Transverse colon (tissue), 4 donors: ENCODE measurements at regions of chr18 and their contacts with region 1.

Region 1: DNA sequence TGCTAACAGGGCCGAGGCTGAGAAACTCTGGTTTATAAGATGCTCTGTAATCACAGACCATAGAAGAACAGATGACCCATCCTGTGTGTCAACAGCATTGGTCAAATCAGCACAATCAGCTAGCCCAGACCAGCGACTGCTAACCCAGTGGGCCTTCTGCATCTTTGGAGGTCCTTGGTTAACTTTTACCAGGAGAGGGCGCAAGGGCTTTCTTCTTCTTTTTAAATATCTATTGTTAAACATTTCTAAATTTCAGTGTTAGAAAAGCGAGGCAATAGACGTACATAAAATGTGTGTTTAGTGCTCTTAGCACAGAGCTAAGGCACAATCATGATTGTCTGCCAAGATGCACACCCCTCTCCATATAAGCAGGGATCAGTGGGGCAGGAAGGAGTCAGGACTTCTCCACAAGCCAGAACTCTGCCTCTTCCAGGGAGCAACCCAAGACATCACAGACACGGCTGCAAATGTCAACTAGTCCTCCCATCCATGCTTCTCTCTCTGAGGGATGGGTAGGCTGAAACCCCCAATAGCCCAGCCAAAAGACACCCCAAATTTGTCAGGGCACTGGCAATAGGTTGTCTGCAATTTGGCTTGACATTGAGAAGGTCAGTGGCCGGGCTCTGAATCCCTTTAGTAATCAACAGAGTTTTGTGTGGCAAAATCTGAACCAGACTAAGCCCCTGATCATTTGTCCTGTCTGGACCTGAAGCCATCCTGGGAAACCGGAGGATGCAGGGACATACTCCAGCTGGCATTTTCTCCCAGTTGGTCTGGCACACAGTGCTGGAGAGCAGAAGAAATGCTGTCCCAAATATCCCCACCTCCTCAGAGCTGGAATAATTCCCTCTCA is 188.2 kb downstream of the BCL2 start:
- DNase-seq: peak; percentile 74
- H3K4me3 ChIP-seq: no peak overlapping the region
- H3K27ac ChIP-seq: peak overlapping the region; percentile 55 to 64 (median 62)
- H3K4me1 ChIP-seq: peaks cover 0 to 20% (median 16%) of the 10 kb centered on the region in 4 donors
- H3K27me3 ChIP-seq: no peaks in the 10 kb centered on the region
- CTCF ChIP-seq: peak; percentile 61 to 72 (median 68)
- EP300 ChIP-seq: no peak
- POLR2A ChIP-seq: no peak

Region 2: DNA sequence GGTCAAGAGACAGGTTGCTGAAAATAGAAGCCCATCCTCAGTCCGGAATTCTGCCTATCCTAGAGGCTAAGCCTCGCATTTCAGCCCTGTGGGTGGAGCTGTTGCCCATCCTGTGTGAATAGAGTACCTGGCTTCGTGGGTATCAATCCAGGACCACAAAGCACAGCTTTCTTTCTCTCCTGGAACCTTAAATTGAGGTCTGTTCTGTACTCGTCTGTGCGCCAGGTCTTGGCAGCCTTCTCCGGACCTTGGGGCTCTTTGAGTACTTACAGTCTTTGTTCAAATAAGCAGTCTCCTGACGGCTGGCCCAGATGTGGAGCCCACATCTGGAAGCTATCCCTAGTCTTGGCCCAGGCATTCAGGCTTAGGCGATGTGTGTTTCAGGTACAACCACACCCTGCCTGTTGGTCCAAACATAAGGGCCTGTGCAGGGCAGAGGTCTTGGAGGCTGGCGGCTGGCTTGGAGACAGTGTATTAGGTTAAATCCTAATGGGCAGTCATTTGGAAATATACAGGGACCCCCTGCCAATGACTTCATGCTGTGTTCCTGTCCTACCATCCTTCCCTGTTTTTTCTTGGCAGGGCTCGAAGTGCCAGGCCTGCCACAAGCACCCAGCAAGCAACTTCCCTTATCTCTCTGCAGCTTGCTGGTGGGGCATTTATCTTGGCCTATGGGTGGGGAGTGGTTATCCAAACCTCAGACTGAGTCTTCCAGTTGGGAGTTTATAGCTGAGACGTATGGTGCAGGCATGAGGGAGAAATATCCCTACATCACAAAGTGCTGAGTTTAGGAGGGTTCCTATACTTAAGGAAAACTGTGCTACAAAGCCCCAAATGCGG is 105.9 kb before region 1 on chr18:
- in situ Hi-C with region 1: no loop called
- intact Hi-C with region 1: loop called (anchors 10 kb)
- DNase-seq: peak; percentile 39
- H3K4me3 ChIP-seq: no peak overlapping the region
- H3K27ac ChIP-seq: no peak overlapping the region
- H3K4me1 ChIP-seq: no peaks in the 10 kb centered on the region
- H3K27me3 ChIP-seq: no peaks in the 10 kb centered on the region
- CTCF ChIP-seq: peak in 3 of 5 experiments; percentile 31 to 41 (median 34)
- EP300 ChIP-seq: no peak
- POLR2A ChIP-seq: no peak

Region 3: GRCh38 chr18:63356272-63356896 is 225.1 kb after region 1 on chr18:
- in situ Hi-C with region 1: no loop called
- intact Hi-C with region 1: no loop called
- DNase-seq: no peak
- H3K4me3 ChIP-seq: no peak overlapping the region
- H3K27ac ChIP-seq: no peak overlapping the region
- H3K4me1 ChIP-seq: no peaks in the 10 kb centered on the region
- H3K27me3 ChIP-seq: no peaks in the 10 kb centered on the region
- CTCF ChIP-seq: no peak
- EP300 ChIP-seq: no peak
- POLR2A ChIP-seq: no peak